HCT116 (cell line): ENCODE measurements at regions of chr15 and their contacts with region 1.

Region 1: GRCh38 chr15:66851226-66852071 is 149.4 kb downstream of the SMAD6 start:
- DNase-seq: peak; percentile 59
- ATAC-seq: peak; percentile 94
- H3K4me3 ChIP-seq: no peak overlapping the region
- H3K27ac ChIP-seq: no peak overlapping the region
- H3K4me1 ChIP-seq: peaks cover 11 to 18% of the 10 kb centered on the region in 2 experiments; a peak in 3 of 4 replicates
- H3K27me3 ChIP-seq: no peaks in the 10 kb centered on the region
- CTCF ChIP-seq: peak; percentile 87 to 95 (median 94)
- POLR2A ChIP-seq: no peak
- RAD21 ChIP-seq: peak; percentile 86

Region 2: GRCh38 chr15:66619151-66619903 is 232.1 kb before region 1 on chr15:
- CTCF ChIA-PET with region 1: interaction called, 23 read pairs
- POLR2A ChIA-PET with region 1: no interaction called
- RAD21 ChIA-PET with region 1: interaction called, 3 to 4 read pairs
- intact Hi-C with region 1: loop called (anchors 5 kb)
- DNase-seq: peak; percentile 49
- ATAC-seq: peak; percentile 96
- H3K4me3 ChIP-seq: no peak overlapping the region
- H3K27ac ChIP-seq: no peak overlapping the region
- H3K4me1 ChIP-seq: peaks cover 6 to 25% of the 10 kb centered on the region in 2 experiments; a peak in 3 of 4 replicates
- H3K27me3 ChIP-seq: no peaks in the 10 kb centered on the region
- CTCF ChIP-seq: peak; percentile 88 to 95 (median 90)
- POLR2A ChIP-seq: no peak
- RAD21 ChIP-seq: peak; percentile 81

Region 3: DNA sequence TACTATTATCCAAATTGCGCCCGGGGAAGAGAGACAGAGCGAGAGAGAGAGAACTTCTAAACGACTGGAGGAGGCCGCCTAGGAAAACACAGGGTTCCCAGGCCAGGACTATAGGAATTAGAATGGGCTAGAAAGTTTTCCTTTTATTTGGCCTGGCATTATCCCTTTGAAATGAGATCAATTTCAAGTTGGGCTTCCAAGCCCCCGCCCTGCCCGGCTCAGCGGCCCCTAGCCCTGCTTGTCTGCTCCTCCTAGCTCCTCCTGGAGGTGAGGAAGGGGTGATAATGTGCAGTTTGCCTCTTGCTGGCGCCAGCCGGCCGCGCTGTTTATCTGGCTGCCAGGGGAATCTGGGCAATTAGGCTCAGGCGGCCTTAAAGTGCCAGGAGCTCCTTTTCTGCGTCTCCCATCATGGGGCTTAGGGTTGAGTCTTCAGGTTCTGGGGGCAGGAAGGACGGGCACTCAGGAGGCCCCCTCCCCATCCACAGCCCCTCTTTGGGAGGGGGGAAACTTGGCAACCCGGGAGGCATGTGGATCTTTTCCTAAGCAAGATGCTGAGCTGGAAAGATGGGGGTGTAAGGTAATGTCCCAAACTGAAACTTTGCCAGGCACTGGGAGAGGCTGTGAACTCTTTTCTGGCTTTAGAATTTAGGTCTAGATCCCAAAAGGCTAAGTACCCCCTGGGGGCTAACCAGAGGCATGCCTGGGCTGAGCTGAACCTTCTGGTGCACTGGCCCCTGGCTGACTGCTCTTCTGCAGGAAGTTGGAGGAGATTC is 144.0 kb before region 1 on chr15:
- CTCF ChIA-PET with region 1: interaction called, 15 read pairs
- POLR2A ChIA-PET with region 1: no interaction called
- RAD21 ChIA-PET with region 1: no interaction called
- intact Hi-C with region 1: loop called (anchors 5 kb)
- DNase-seq: no peak
- ATAC-seq: peak; percentile 64
- H3K4me3 ChIP-seq: peak overlapping the region; percentile 5 to 32; a peak in 3 of 4 replicates
- H3K27ac ChIP-seq: peak overlapping the region; percentile 39
- H3K4me1 ChIP-seq: peaks cover 44 to 58% of the 10 kb centered on the region in 2 experiments
- H3K27me3 ChIP-seq: no peaks in the 10 kb centered on the region
- CTCF ChIP-seq: 0 out of 6 replicates have a peak, but pooled peaks of 2 of the 3 experiments have one; percentile 3 to 11
- POLR2A ChIP-seq: no peak
- RAD21 ChIP-seq: no peak

Region 4: DNA sequence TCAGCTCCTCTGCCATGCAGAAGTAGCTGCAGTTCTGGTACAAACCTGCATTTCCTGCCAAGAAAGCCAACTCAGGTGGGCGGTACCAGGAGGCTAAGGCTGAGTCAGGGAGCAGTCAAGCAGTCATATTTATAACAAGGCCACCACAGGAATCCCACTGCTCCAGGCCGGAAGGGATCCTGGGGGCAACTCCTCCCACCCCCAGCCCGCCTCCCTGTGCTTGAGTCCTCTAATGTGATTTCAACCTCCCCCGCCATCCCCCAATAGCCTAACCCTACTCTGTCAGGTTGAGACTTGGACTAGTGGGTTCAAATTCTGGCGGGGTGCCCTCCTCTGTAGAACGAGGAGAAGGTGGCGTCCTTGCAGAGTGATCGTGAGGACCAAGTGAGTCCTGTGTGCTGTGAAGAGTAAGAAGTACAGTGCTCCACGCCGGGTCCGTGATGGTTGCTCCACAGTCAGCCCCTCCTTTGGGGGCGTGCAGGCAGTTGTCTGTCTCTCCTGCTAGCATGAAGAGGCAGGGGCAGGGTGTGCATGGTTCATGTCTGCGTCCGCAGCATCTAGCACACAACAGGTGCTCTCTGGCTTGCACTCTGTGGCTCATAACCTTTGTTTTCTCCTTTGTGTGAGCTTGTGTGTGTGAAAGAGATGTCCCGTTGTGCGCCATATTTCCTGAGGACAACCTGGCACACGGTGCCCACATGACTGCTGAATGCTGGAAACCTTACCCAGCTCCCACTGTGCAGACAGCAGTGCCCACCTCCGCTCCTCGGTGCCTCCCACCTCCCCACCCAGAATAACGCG is 71.1 kb before region 1 on chr15:
- CTCF ChIA-PET with region 1: interaction called, 22 read pairs
- POLR2A ChIA-PET with region 1: no interaction called
- RAD21 ChIA-PET with region 1: interaction called, 3 to 4 read pairs
- intact Hi-C with region 1: no loop called
- DNase-seq: no peak
- ATAC-seq: peak; percentile 84
- H3K4me3 ChIP-seq: peak overlapping the region in 1 of 2 experiments; percentile 22; a peak in 1 of 4 replicates
- H3K27ac ChIP-seq: peak overlapping the region; percentile 56
- H3K4me1 ChIP-seq: peaks cover 40 to 51% of the 10 kb centered on the region in 2 experiments
- H3K27me3 ChIP-seq: no peaks in the 10 kb centered on the region
- CTCF ChIP-seq: no peak
- POLR2A ChIP-seq: no peak
- RAD21 ChIP-seq: no peak

Region 5: DNA sequence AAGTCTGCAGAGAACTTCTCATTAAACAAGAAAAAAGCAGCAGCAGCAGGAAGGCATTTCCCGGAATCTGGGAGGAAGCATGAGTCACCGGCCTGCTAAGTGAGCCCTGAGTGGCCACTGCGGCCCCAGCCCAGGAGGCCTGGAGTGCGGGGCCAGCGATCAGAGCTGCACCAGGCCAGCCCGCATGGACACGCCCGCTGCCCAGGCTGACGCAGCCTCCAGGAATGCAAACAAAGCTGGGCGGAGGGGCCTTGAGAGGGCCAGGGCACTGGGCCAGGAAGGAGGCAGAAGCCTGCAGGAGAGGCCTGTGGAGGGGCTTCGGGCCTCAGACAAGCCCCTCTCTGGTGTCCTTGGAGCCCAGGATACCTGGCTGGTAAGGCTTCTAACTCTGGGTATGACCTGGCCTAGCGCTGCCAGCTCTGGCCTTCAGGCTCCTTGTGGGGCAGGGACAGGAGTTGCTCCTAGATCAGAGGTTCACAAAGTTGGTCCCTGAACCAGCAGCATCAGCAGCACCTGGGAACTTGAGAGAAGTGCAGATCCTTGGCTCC is 48.2 kb before region 1 on chr15:
- CTCF ChIA-PET with region 1: interaction called, 13 read pairs
- POLR2A ChIA-PET with region 1: no interaction called
- RAD21 ChIA-PET with region 1: no interaction called
- intact Hi-C with region 1: no loop called
- DNase-seq: peak; percentile 86
- ATAC-seq: peak; percentile 97
- H3K4me3 ChIP-seq: peak overlapping the region in 1 of 2 experiments; percentile 44; a peak in 2 of 4 replicates
- H3K27ac ChIP-seq: peak overlapping the region; percentile 65
- H3K4me1 ChIP-seq: peaks cover 40 to 46% of the 10 kb centered on the region in 2 experiments
- H3K27me3 ChIP-seq: no peaks in the 10 kb centered on the region
- CTCF ChIP-seq: no peak
- POLR2A ChIP-seq: no peak
- RAD21 ChIP-seq: no peak

Region 6: GRCh38 chr15:67479781-67480505 is 628.5 kb after region 1 on chr15:
- CTCF ChIA-PET with region 1: no interaction called
- POLR2A ChIA-PET with region 1: no interaction called
- RAD21 ChIA-PET with region 1: no interaction called
- intact Hi-C with region 1: no loop called
- DNase-seq: no peak
- ATAC-seq: no peak
- H3K4me3 ChIP-seq: no peak overlapping the region
- H3K27ac ChIP-seq: no peak overlapping the region
- H3K4me1 ChIP-seq: no peaks in the 10 kb centered on the region
- H3K27me3 ChIP-seq: no peaks in the 10 kb centered on the region
- CTCF ChIP-seq: no peak
- POLR2A ChIP-seq: no peak
- RAD21 ChIP-seq: no peak